PC-9 (cell line): ENCODE measurements at regions of chr2 and their contacts with region 1.

Region 1: DNA sequence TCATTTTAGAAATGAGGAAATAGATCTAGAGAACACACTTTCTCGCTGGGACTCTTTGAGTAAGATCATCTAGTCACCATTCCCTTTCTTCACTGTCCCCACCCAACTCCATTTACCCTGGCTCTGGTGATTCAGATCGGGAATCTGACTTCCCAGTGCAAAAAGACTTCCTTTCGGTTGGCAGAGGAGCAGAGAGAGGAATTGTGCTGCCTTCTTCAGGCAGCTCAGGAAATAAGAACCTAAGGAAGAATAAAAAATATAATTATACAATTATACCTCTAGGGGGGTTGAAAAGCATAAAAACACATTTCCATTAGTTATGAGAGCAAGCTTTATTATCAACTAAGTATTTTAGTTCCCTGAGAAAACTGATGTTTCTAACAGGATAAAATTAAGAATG is 9.3 kb upstream of the MPP4 start:
- DNase-seq: no peak
- H3K4me3 ChIP-seq: no peak overlapping the region
- H3K27ac ChIP-seq: no peak overlapping the region
- H3K4me1 ChIP-seq: no peaks in the 10 kb centered on the region
- H3K27me3 ChIP-seq: no peaks in the 10 kb centered on the region
- CTCF ChIP-seq: no peak

Region 2: GRCh38 chr2:201746551-201746950 is 38.8 kb after region 1 on chr2:
- CTCF ChIA-PET with region 1: interaction called, 10 read pairs
- POLR2A ChIA-PET with region 1: interaction called, 10 read pairs
- intact Hi-C with region 1: no loop called
- DNase-seq: no peak
- H3K4me3 ChIP-seq: no peak overlapping the region
- H3K27ac ChIP-seq: no peak overlapping the region
- H3K4me1 ChIP-seq: no peaks in the 10 kb centered on the region
- H3K27me3 ChIP-seq: no peaks in the 10 kb centered on the region
- CTCF ChIP-seq: no peak

Region 3: GRCh38 chr2:201754717-201755415 is 47.1 kb after region 1 on chr2:
- CTCF ChIA-PET with region 1: interaction called, 10 read pairs
- POLR2A ChIA-PET with region 1: no interaction called
- intact Hi-C with region 1: no loop called
- DNase-seq: no peak
- H3K4me3 ChIP-seq: no peak overlapping the region
- H3K27ac ChIP-seq: no peak overlapping the region
- H3K4me1 ChIP-seq: no peaks in the 10 kb centered on the region
- H3K27me3 ChIP-seq: no peaks in the 10 kb centered on the region
- CTCF ChIP-seq: no peak

Region 4: GRCh38 chr2:201768918-201769317 is 61.2 kb after region 1 on chr2:
- CTCF ChIA-PET with region 1: no interaction called
- POLR2A ChIA-PET with region 1: no interaction called
- intact Hi-C with region 1: no loop called
- DNase-seq: no peak
- H3K4me3 ChIP-seq: no peak overlapping the region
- H3K27ac ChIP-seq: no peak overlapping the region
- H3K4me1 ChIP-seq: no peaks in the 10 kb centered on the region
- H3K27me3 ChIP-seq: no peaks in the 10 kb centered on the region
- CTCF ChIP-seq: no peak